ENCODE measurements at regions of chr20 and their contacts with region 1.

Region 1: DNA sequence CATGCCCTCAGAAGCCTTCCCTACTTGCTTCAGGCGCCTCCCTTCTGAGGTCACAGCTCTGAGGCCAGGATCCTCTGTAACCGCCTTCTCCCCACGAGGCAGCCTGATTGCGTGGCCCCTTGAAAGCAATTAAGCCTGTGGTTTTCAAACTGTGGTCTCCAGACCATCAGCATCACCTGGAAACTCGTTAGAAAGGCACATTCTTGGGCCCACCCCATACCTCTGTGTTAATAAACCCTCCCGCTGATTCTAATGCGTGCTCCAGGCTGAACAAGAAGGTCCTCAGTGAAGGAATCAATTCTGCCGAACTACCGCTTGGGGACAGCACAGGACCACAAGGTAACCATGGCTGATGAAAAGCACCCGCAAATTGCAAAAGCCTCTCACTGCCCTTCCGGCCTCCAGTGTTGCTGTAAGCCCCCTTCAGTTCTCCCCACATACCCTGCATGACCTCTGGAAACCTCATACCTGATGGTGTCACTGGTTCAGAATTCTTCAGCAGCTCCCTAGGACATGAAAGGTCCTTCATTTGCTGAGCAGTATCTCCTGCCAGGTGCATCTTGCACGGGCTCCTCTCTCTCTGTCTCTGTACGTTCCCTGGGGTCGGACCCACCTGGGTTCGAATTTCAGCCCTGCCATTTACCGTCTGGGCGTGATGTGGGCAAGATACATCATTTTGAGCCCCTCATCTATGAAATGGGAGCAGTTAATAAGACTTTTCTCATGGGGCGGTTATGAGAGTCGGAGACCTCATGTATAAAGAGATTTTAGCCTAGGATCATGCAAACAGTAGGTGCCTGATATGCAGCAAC is 93.3 kb upstream of the RNF24 start:
- DNase-seq: peak; percentile 30
- ATAC-seq: peak; percentile 76
- H3K4me3 ChIP-seq: no peak overlapping the region
- H3K27ac ChIP-seq: no peak overlapping the region
- H3K4me1 ChIP-seq: peaks cover 24% of the 10 kb centered on the region
- H3K27me3 ChIP-seq: peaks cover 0 to 2% of the 10 kb centered on the region in 2 experiments; a peak in 2 of 4 replicates
- CTCF ChIP-seq: peak; percentile 97 to 99 (median 99); a peak in 5 of 6 replicates
- EP300 ChIP-seq: no peak
- POLR2A ChIP-seq: no peak
- RAD21 ChIP-seq: peak; percentile 98

Region 2: DNA sequence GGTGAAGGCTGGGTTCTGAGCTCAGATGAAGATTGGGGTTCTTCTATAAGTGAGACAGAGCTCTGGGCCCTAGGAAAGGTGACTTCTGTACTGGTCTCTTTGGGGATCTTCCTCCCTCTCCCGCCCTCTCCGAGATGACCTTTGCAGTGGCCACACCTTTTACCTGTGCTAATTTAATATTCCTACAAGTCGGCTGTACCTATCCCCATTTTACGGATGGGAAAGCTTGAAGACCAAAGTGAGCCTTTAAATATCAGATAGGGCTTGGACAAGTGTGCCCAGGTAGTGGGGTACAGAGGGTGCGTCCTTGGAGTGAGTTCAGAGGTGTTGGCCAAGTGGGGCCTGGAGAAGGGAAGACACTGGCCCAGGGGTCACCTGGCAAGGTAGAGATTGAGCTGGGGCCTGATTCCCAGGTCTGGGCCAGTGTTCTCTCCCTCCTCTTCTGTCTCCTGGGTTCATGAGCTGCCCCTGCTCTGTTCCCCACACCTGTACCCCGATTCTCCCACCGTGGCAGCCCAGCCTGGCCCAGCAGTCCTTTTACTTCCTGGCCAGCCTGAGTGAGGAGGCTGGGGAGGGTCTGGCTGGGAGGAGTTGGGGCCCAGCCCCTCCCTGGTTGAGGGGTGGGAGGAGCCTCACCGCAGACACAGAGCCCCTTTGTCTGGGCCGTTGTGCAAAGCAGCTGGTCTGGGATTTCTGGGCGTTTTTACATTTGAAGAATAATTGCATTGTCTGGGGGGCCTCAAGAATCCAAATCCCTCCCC is 58.7 kb after region 1 on chr20:
- CTCF ChIA-PET with region 1: interaction called, 16 read pairs
- POLR2A ChIA-PET with region 1: interaction called, 3 read pairs
- RAD21 ChIA-PET with region 1: interaction called, 21 read pairs
- SMC1A ChIA-PET with region 1: interaction called, 12 read pairs
- in situ Hi-C with region 1: no loop called
- intact Hi-C with region 1: no loop called
- DNase-seq: no peak
- ATAC-seq: no peak
- H3K4me3 ChIP-seq: no peak overlapping the region
- H3K27ac ChIP-seq: no peak overlapping the region
- H3K4me1 ChIP-seq: peaks cover 3% of the 10 kb centered on the region; the same call in 1 of the 2 replicates
- H3K27me3 ChIP-seq: peaks cover 0 to 5% of the 10 kb centered on the region in 2 experiments; a peak in 2 of 4 replicates
- CTCF ChIP-seq: no peak
- EP300 ChIP-seq: no peak
- POLR2A ChIP-seq: no peak
- RAD21 ChIP-seq: no peak

Region 3: DNA sequence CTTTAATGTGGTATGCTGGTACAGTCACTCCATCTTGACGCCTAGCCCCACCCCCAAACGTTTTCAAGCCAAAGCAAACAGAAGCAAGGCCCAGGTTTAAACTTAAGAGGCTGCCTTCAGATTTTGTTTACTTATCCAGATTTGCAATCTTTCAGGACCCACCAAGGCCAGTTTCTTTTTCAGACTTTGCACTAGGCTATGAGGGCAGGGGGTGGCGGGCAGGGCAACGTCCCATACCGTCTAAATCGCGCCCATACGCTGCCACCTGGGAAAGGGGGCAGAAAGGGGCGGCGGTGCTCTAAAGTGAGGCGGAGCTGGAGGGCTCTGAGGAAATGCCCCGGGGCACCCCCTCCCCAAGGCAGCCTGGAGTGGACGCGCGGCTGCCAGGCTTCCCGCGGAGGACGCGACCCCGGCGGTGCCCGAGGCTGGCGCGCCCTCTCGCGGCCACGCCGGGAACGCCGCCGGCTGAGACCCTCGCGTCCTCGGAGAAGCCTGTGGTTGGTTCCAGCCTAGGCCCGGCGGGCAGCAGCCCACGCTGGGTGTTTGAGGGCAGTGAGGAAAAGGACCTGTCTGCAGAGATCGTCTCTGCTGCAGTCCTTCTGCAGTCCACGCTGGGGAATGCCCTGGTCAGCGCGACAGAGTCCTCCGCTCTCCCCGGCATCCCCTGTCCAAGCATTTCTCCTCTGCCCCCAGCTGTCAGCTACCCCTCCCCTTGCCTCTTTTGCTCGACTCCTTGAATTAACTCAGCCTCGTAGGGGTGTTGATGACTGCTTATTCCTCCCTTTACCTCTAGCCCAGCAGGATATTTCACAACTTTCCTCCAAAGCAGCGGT is 483.8 kb after region 1 on chr20:
- CTCF ChIA-PET with region 1: interaction called, 8 read pairs
- POLR2A ChIA-PET with region 1: no interaction called
- RAD21 ChIA-PET with region 1: interaction called, 3 read pairs
- SMC1A ChIA-PET with region 1: interaction called, 7 read pairs
- in situ Hi-C with region 1: loop called (anchors 5 kb)
- intact Hi-C with region 1: loop called (anchors 1 kb)
- DNase-seq: no peak
- ATAC-seq: peak; percentile 87
- H3K4me3 ChIP-seq: no peak overlapping the region
- H3K27ac ChIP-seq: no peak overlapping the region
- H3K4me1 ChIP-seq: no peaks in the 10 kb centered on the region
- H3K27me3 ChIP-seq: no peaks in the 10 kb centered on the region
- CTCF ChIP-seq: peak; percentile 69 to 77 (median 74); a peak in 5 of 6 replicates
- EP300 ChIP-seq: no peak
- POLR2A ChIP-seq: no peak
- RAD21 ChIP-seq: peak; percentile 71

Region 4: GRCh38 chr20:4720041-4720976 is 611.6 kb after region 1 on chr20:
- CTCF ChIA-PET with region 1: no interaction called
- POLR2A ChIA-PET with region 1: no interaction called
- RAD21 ChIA-PET with region 1: no interaction called
- SMC1A ChIA-PET with region 1: no interaction called
- in situ Hi-C with region 1: no loop called
- intact Hi-C with region 1: loop called (anchors 1 kb)
- DNase-seq: peak; percentile 71
- ATAC-seq: peak; percentile 96
- H3K4me3 ChIP-seq: peak overlapping the region; percentile 19; the same call in 1 of the 2 replicates
- H3K27ac ChIP-seq: peak overlapping the region; percentile 67
- H3K4me1 ChIP-seq: peaks cover 17% of the 10 kb centered on the region
- H3K27me3 ChIP-seq: no peaks in the 10 kb centered on the region
- CTCF ChIP-seq: peak; percentile 65 to 86 (median 72); a peak in 5 of 6 replicates
- EP300 ChIP-seq: peak in 1 of 2 experiments; percentile 45; a peak in 1 of 4 replicates
- POLR2A ChIP-seq: peak; percentile 37; the same call in 1 of the 2 replicates
- RAD21 ChIP-seq: peak; percentile 96